Heart right ventricle (tissue), 16 donors: ENCODE measurements at regions of chr14 and their contacts with region 1.

Region 1: GRCh38 chr14:35121887-35122695 is at the starts of genes PPP2R3C and PRORP:
- DNase-seq: peak; percentile 86 to 93
- ATAC-seq: peak; percentile 93 to 97 (median 96)
- H3K4me3 ChIP-seq: peak within 1 kb of the TSS; percentile 33 to 90 (median 70)
- H3K27ac ChIP-seq: peak within 1 kb of the TSS; percentile 92 to 98 (median 95)
- H3K4me1 ChIP-seq: peaks cover 0 to 73% (median 34%) of the 10 kb centered on the region in 9 donors
- H3K27me3 ChIP-seq: no peaks in the 10 kb centered on the region
- CTCF ChIP-seq: no peak
- total RNA-seq, gene PPP2R3C: 25.8 to 36.3 (median 27.9) TPM
- total RNA-seq, gene PRORP: 17.6 to 25.4 (median 20.9) TPM

Region 2: GRCh38 chr14:34875031-34875922 is 246.8 kb before region 1 on chr14 and contains the start of gene BAZ1A:
- intact Hi-C with region 1: loop called in 2 of 10 experiments (anchors 10 kb)
- DNase-seq: peak; percentile 59 to 65
- ATAC-seq: peak; percentile 22 to 71 (median 56)
- H3K4me3 ChIP-seq: peak within 1 kb of the TSS; percentile 73 to 96 (median 81)
- H3K27ac ChIP-seq: peak within 1 kb of the TSS; percentile 93 to 100 (median 98)
- H3K4me1 ChIP-seq: peaks cover 0 to 36% (median 7%) of the 10 kb centered on the region in 9 donors
- H3K27me3 ChIP-seq: no peaks in the 10 kb centered on the region
- CTCF ChIP-seq: peak in 5 of 9 donors; percentile 5 to 44 (median 41)
- total RNA-seq, gene BAZ1A: 3.8 to 14.5 (median 4.5) TPM

Region 3: GRCh38 chr14:34982417-34983147 is 139.5 kb before region 1 on chr14 and contains the start of gene SRP54:
- intact Hi-C with region 1: loop called in 2 of 10 experiments (anchors 5 kb)
- DNase-seq: peak; percentile 98
- ATAC-seq: peak; percentile 96 to 98 (median 98)
- H3K4me3 ChIP-seq: peak within 1 kb of the TSS; percentile 49 to 94 (median 79)
- H3K27ac ChIP-seq: peak within 1 kb of the TSS; percentile 82 to 99 (median 96)
- H3K4me1 ChIP-seq: peaks cover 0 to 52% (median 38%) of the 10 kb centered on the region in 9 donors
- H3K27me3 ChIP-seq: no peaks in the 10 kb centered on the region
- CTCF ChIP-seq: peak in 1 of 9 donors; percentile 26
- total RNA-seq, gene SRP54: 29.2 to 38.2 (median 34.6) TPM

Region 4: GRCh38 chr14:35046048-35046741 is 75.9 kb before region 1 on chr14 and contains the start of gene FAM177A1:
- intact Hi-C with region 1: loop called in 6 of 10 experiments (anchors 2 to 10 kb)
- DNase-seq: peak; percentile 98 to 99
- ATAC-seq: peak; percentile 97 to 99 (median 98)
- H3K4me3 ChIP-seq: peak within 1 kb of the TSS; percentile 66 to 96 (median 81)
- H3K27ac ChIP-seq: peak within 1 kb of the TSS; percentile 92 to 99 (median 96)
- H3K4me1 ChIP-seq: peaks cover 4 to 53% (median 33%) of the 10 kb centered on the region in 9 donors
- H3K27me3 ChIP-seq: no peaks in the 10 kb centered on the region
- CTCF ChIP-seq: no peak
- total RNA-seq, gene FAM177A1: 68.1 to 122 (median 104) TPM

Region 5: GRCh38 chr14:35814371-35815005 is 692.4 kb after region 1 on chr14:
- intact Hi-C with region 1: loop called in 1 of 10 experiments (anchors 10 kb)
- DNase-seq: peak; percentile 29 to 45
- ATAC-seq: peak in 1 of 8 donors; percentile 46
- H3K4me3 ChIP-seq: no peak overlapping the region
- H3K27ac ChIP-seq: no peak overlapping the region
- H3K4me1 ChIP-seq: no peaks in the 10 kb centered on the region
- H3K27me3 ChIP-seq: no peaks in the 10 kb centered on the region
- CTCF ChIP-seq: peak; percentile 44 to 78 (median 71)

Region 6: DNA sequence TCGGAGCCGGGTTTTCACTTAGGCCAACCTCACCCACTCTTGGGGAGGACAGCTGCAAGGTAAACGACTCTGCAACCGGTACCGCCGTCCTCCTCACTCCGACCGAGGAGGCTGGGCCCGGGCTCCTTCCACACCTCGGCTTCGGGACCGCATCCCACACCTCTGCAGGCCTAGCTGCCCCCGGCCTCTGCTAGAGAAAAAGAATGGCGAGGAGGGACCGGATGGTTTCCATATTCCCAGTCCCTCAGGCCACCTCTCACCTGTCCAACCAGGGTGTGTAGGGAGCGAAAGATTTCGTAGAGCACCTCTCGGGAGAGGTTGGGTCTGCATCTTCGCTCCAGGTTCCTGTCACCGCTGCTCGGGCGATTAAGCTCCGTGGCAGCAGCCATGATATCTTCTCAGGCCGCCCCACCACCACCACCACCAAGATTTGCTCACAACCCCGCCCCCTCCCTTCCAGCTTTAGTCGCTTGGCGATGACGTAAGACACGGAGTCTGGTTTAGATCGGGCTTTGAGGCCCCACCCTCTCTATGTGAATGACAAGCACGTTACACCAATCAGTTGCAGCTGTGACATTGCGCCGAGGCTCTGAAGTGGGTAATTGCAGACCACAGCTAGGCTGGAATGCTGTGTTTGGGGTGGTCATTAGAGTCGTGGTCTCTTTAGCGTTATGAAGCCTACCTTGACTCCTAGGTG is 1198.3 kb after region 1 on chr14 and contains the start of gene MBIP:
- intact Hi-C with region 1: loop called in 1 of 10 experiments (anchors 10 kb)
- DNase-seq: peak; percentile 76 to 96
- ATAC-seq: peak; percentile 99 to 100 (median 100)
- H3K4me3 ChIP-seq: peak within 1 kb of the TSS; percentile 77 to 93 (median 84)
- H3K27ac ChIP-seq: peak within 1 kb of the TSS in 9 of 10 donors; percentile 63 to 88 (median 78)
- H3K4me1 ChIP-seq: peaks cover 0 to 35% (median 17%) of the 10 kb centered on the region in 9 donors
- H3K27me3 ChIP-seq: peaks cover 0 to 31% (median 0%) of the 10 kb centered on the region in 7 donors
- CTCF ChIP-seq: no peak
- total RNA-seq, gene MBIP: 8.3 to 15.1 (median 10.2) TPM